MCF 10A (cell line): ENCODE measurements at regions of chr20 and their contacts with region 1.

Region 1: GRCh38 chr20:6008254-6008653 is 45.6 kb downstream of the LRRN4 start:
- DNase-seq: peak; percentile 99
- H3K4me3 Mint-ChIP-seq: peak overlapping the region; percentile 76
- H3K27ac Mint-ChIP-seq: peak overlapping the region; percentile 83
- H3K4me1 Mint-ChIP-seq: peaks cover 21% of the 10 kb centered on the region
- H3K27me3 Mint-ChIP-seq: no peaks in the 10 kb centered on the region
- CTCF ChIP-seq: no peak

Region 2: GRCh38 chr20:5820738-5821137 is 187.5 kb before region 1 on chr20:
- CTCF ChIA-PET with region 1: no interaction called
- POLR2A ChIA-PET with region 1: no interaction called
- intact Hi-C with region 1: no loop called
- DNase-seq: no peak
- H3K4me3 Mint-ChIP-seq: no peak overlapping the region
- H3K27ac Mint-ChIP-seq: no peak overlapping the region
- H3K4me1 Mint-ChIP-seq: peaks cover 20% of the 10 kb centered on the region
- H3K27me3 Mint-ChIP-seq: no peaks in the 10 kb centered on the region
- CTCF ChIP-seq: no peak

Region 3: DNA sequence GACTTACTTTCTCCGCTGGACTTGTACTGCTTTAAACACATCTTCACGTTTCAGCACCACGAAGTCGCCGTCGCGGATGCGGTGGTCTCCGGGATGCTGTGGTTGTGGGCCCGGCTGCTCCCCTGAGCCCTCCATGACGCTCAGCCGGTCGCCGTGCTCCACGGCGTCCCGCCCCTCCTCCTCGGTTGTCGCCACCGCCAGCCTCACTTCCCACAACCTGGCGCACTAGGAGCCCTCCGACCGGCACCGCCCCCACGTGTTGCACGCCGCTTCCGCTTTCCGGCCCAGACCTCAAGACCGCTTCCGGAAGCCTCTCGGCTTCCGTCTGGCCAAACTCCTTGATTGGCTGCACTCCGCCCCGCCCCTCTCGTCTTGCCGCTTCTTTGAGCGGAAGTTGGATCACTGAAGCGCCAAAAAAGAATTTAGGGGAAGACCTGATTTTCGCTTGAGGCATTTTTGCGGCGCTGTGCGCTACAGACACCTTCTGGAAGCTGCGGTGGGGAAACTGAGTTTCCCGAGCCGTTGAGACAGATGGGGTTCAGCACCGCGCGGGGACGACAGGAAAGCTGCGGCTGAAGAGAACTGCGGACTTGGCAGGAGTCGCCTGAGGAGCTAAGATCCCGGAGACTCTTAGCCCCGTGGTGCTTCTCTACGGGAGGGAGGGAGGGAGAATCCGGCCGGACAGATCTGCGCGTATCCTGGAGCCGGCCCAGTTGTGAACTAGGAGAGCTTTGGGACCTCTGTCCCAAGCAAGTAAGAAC is 57.8 kb before region 1 on chr20 and contains the starts of genes MCM8 and TRMT6:
- CTCF ChIA-PET with region 1: interaction called, 7 read pairs
- POLR2A ChIA-PET with region 1: interaction called, 11 read pairs
- intact Hi-C with region 1: no loop called
- DNase-seq: peak; percentile 96
- H3K4me3 Mint-ChIP-seq: peak within 1 kb of the TSS; percentile 99
- H3K27ac Mint-ChIP-seq: peak within 1 kb of the TSS; percentile 59
- H3K4me1 Mint-ChIP-seq: peaks cover 22% of the 10 kb centered on the region
- H3K27me3 Mint-ChIP-seq: no peaks in the 10 kb centered on the region
- CTCF ChIP-seq: no peak
- total RNA-seq, gene MCM8: 8.0 and 12.4 TPM in 2 replicates
- total RNA-seq, gene TRMT6: 31.0 and 44.9 TPM in 2 replicates

Region 4: DNA sequence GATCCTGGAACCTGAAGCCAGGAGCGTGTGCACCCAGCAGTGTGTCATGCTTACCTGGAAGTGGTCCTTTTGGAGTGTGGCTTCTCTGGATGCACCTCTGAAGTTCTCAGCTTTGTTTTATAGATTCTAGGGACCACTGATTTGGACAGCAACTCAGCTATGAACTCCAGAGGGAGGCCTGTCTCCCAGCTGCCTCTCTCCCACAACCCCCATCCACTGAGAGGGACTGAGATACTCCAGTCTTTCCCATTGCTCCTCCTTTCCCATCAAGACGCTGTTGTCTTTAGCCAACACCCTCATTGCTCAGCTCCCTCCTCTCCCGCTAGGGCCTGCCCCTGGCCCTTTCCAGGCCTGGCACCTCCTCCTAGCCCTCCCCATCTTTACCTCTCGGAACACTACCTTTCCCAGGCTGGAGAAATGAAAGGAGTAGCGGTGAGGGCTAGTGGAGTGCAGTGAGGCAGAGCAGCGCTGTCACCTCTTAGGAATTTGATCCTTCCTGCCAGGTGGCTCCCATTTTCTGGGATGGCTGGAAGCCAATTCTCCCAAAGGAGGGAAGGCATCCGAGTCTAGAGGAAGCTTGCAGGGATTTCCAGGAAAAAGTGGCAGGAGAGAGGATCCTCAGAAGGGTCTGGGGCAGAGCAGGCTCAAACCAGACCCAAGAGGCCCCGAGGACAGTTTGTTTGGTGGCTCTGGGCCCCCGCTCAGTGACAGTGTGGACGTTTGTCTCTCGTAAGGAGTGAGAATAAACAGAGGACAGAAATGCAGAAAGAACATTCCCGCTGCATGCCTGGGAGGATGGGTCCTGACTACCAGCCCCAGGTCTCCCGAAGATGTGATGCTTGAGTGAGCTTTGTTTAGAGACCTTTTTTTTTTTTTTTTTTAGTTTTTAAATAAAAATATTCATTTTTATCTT is 45.8 kb after region 1 on chr20 and contains the start of gene LRRN4:
- CTCF ChIA-PET with region 1: interaction called, 5 read pairs
- POLR2A ChIA-PET with region 1: interaction called, 14 read pairs
- intact Hi-C with region 1: no loop called
- DNase-seq: peak; percentile 84
- H3K4me3 Mint-ChIP-seq: peak within 1 kb of the TSS; percentile 51
- H3K27ac Mint-ChIP-seq: peak within 1 kb of the TSS; percentile 73
- H3K4me1 Mint-ChIP-seq: peaks cover 23% of the 10 kb centered on the region
- H3K27me3 Mint-ChIP-seq: no peaks in the 10 kb centered on the region
- CTCF ChIP-seq: no peak
- total RNA-seq, gene LRRN4: not detected in 2 replicates

Region 5: GRCh38 chr20:6401893-6402557 is 393.8 kb after region 1 on chr20:
- CTCF ChIA-PET with region 1: no interaction called
- POLR2A ChIA-PET with region 1: no interaction called
- intact Hi-C with region 1: no loop called
- DNase-seq: no peak
- H3K4me3 Mint-ChIP-seq: no peak overlapping the region
- H3K27ac Mint-ChIP-seq: no peak overlapping the region
- H3K4me1 Mint-ChIP-seq: no peaks in the 10 kb centered on the region
- H3K27me3 Mint-ChIP-seq: no peaks in the 10 kb centered on the region
- CTCF ChIP-seq: no peak